ENCODE measurements at regions of chr7 and their contacts with region 1.

Region 1: DNA sequence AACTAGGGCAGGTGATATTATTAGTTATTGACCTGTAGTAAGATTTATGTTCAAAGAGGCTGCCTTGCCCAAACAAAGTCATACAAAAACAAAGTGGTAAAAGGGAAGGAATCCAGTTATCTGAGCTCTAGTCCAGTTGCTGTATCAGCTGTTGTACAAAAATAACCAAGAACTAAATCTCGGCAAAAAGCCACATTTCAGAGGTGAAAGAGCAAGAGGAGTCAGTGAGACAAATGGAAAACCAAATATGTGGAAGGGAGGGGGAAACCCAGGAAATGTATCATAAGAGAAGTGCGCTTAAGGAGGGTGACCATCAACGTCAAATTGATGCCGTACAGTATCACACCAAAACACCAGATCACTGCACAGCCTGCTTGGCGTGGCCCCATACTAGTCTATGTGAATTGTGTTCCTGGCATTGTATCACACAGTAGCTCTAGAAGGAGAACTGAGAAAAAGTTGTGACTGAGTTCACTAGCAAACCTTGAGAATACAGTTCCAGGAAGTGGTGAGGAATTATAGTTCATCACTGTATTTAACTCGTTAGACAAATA is 6.4 kb downstream of the AGBL3 start:
- DNase-seq: no peak
- ATAC-seq: no peak

Region 2: GRCh38 chr7:134710859-134711624 is 281.7 kb before region 1 on chr7:
- intact Hi-C with region 1: no loop called
- DNase-seq: no peak
- ATAC-seq: no peak

Region 3: GRCh38 chr7:135169141-135169960 is 176.6 kb after region 1 on chr7:
- intact Hi-C with region 1: loop called in 1 of 2 experiments (anchors 5 kb)
- DNase-seq: peak; percentile 62 to 64
- ATAC-seq: peak; percentile 27

Measured in left colon (tissue), 2 donors.